K562 (cell line): ENCODE measurements at regions of chr6 and their contacts with region 1.

Region 1: GRCh38 chr6:149305372-149305771 is 12.1 kb upstream of the TAB2 start:
- DNase-seq: no peak
- ATAC-seq: no peak
- H3K4me3 ChIP-seq: no peak overlapping the region
- H3K27ac ChIP-seq: no peak overlapping the region
- H3K4me1 ChIP-seq: no peaks in the 10 kb centered on the region
- H3K27me3 ChIP-seq: peaks cover 4 to 6% of the 10 kb centered on the region in 2 experiments; a peak in 2 of 5 replicates
- CTCF ChIP-seq: no peak
- EP300 ChIP-seq: no peak
- POLR2A ChIP-seq: no peak
- RAD21 ChIP-seq: no peak

Region 2: DNA sequence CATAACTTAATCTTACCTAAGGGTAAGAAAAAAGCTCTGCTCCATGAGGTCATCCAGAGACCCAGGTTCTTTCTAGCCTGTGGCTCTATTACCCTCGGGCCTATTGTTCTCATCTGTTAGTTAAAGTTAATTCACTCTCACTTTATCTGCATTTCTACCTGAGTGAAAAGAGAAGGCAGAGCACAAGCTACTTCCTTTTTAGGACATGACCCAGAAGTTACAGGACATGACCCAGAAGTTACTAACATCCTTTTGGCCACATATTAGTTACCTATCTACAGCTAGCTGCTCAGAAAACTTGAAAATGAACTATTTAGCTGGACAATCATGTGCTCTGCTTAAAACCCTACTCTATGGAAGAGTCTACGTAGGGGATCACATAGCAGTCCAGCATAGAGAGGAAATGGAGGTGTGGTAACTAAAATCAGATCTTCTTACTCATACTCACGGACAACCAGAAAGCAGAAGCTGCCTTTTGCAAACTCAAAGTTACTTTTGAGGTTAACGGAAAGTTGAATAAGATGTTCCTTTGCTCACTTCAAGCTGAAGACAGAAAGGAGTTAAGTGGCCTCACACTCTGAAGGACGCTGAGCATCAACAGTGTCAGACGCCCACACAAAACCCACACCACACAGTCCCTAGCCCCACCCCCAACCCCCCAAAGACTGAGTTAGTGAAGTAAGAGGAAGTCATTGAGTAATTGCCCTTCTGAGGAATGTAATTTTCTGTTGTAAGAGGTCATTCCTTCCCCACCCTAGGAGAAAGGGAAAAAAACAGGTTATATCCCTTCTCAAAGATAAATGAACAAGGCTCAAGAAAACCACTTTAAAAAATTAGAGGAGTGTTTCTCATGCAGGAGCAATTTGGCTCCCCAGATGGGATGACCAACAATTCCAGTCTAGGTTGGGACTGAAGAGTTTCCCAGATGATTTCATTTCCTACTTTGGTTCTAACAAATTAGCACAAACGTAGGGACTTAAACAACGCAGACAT is 33.7 kb before region 1 on chr6:
- CTCF ChIA-PET with region 1: no interaction called
- POLR2A ChIA-PET with region 1: no interaction called
- in situ Hi-C with region 1: no loop called
- intact Hi-C with region 1: no loop called
- DNase-seq: no peak
- ATAC-seq: no peak
- H3K4me3 ChIP-seq: no peak overlapping the region
- H3K27ac ChIP-seq: no peak overlapping the region
- H3K4me1 ChIP-seq: no peaks in the 10 kb centered on the region
- H3K27me3 ChIP-seq: peaks cover 19 to 20% of the 10 kb centered on the region in 2 experiments
- CTCF ChIP-seq: no peak
- EP300 ChIP-seq: no peak
- POLR2A ChIP-seq: no peak
- RAD21 ChIP-seq: no peak

Region 3: DNA sequence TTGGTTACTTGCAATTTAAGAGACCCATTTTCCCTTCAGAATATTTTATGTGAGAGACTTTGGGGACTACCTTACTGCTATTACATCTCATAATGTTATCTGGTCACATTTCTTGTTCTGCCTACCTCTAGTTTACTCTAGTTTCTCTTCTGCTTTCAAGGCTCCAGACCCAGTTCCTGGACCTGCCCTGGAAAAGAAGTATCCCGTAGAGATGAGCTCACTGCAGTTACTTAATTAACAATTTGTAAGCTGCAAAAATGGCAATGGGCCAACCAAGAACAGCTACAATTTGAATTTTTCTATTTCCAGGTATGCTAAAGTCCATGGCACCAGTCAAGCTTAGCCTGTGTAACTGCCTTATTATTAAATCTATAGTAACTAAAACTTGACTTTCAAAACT is 37.2 kb after region 1 on chr6:
- CTCF ChIA-PET with region 1: no interaction called
- POLR2A ChIA-PET with region 1: no interaction called
- in situ Hi-C with region 1: no loop called
- intact Hi-C with region 1: loop called (anchors 1 kb)
- DNase-seq: no peak
- ATAC-seq: no peak
- H3K4me3 ChIP-seq: no peak overlapping the region
- H3K27ac ChIP-seq: no peak overlapping the region
- H3K4me1 ChIP-seq: no peaks in the 10 kb centered on the region; a peak in 1 of 5 replicates
- H3K27me3 ChIP-seq: no peaks in the 10 kb centered on the region
- CTCF ChIP-seq: no peak
- EP300 ChIP-seq: no peak
- POLR2A ChIP-seq: no peak
- RAD21 ChIP-seq: no peak

Region 4: GRCh38 chr6:149468179-149468578 is 162.8 kb after region 1 on chr6:
- CTCF ChIA-PET with region 1: no interaction called
- POLR2A ChIA-PET with region 1: no interaction called
- in situ Hi-C with region 1: no loop called
- intact Hi-C with region 1: no loop called
- DNase-seq: no peak
- ATAC-seq: no peak
- H3K4me3 ChIP-seq: no peak overlapping the region
- H3K27ac ChIP-seq: no peak overlapping the region
- H3K4me1 ChIP-seq: no peaks in the 10 kb centered on the region
- H3K27me3 ChIP-seq: peaks cover 48 to 87% of the 10 kb centered on the region in 2 experiments
- CTCF ChIP-seq: no peak
- EP300 ChIP-seq: no peak
- POLR2A ChIP-seq: no peak
- RAD21 ChIP-seq: no peak